ENCODE measurements at regions of chr19 and their contacts with region 1.

Region 1: DNA sequence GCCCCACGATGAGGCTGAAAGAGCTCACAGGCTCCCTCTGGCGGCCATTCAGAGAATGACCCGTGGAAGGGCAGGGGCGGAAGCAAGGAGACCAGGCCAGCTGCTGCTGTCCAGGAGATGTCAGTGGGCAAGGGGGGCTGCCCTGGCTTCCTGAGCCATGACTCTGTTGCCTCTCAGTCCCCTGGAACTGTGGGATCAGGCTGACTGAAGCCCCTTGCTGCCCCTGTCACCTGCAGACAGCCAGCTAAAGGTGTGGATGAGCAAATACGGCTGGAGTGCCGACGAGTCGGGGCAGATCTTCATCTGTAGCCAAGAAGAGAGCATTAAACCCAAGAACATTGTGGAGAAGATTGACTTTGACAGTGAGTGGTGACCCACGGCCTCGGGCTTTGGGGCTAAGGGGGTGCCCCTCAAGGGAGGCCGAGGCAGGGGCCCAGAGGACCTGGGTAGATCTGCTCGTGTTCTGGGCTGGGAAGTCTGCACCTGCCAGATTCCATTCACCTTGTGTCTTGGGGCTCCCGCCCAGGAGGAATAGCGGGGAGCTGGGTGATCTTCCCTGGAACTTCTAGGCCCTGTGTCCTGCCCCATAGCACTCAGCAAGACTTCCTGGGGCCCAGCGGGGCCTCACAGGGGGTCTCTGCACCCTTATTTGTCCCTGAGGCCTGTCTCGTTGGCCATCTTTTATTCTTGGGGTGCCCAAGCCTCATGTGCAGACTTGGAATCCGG is 12.5 kb upstream of the ACTN4 start:
- DNase-seq: no peak
- H3K4me3 ChIP-seq: no peak overlapping the region
- CTCF ChIP-seq: peak; percentile 89

Region 2: GRCh38 chr19:38402967-38403861 is 231.7 kb before region 1 on chr19 and contains the start of gene FAM98C:
- CTCF ChIA-PET with region 1: interaction called, 112 read pairs
- POLR2A ChIA-PET with region 1: interaction called, 4 read pairs
- DNase-seq: peak; percentile 46
- H3K4me3 ChIP-seq: peak within 1 kb of the TSS; percentile 95
- CTCF ChIP-seq: peak; percentile 90

Region 3: GRCh38 chr19:38485541-38486285 is 149.2 kb before region 1 on chr19:
- CTCF ChIA-PET with region 1: no interaction called
- POLR2A ChIA-PET with region 1: no interaction called
- DNase-seq: no peak
- H3K4me3 ChIP-seq: no peak overlapping the region
- CTCF ChIP-seq: no peak

Region 4: GRCh38 chr19:38544034-38544958 is 90.6 kb before region 1 on chr19:
- CTCF ChIA-PET with region 1: interaction called, 13 read pairs
- POLR2A ChIA-PET with region 1: no interaction called
- DNase-seq: peak; percentile 12
- H3K4me3 ChIP-seq: no peak overlapping the region
- CTCF ChIP-seq: peak; percentile 15

Region 5: DNA sequence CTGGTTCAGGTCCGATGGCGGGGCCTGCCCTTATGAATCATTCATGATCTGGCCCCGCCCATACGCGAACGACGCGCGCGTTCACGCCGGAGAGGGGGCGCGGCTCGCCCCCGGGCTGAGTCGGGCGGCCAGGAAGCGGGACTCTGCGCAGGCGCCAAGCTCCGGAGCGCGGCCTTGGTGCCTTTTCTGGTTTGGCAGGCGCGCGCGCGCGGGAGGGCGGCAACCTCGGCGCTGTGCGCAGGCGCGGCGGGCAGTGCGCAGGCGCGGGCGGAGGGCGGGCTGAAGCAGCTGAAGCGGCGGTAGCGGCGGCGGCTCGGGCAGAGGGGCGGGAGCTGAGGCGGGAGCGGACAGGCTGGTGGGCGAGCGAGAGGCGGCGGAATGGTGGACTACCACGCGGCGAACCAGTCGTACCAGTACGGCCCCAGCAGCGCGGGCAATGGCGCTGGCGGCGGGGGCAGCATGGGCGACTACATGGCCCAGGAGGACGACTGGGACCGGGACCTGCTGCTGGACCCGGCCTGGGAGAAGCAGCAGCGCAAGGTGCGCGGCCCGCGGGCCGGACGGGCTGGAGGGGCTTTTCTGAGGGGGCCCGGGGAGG is 12.5 kb after region 1 on chr19 and contains the start of gene ACTN4:
- CTCF ChIA-PET with region 1: interaction called, 106 read pairs
- POLR2A ChIA-PET with region 1: interaction called, 4 read pairs
- DNase-seq: no peak
- H3K4me3 ChIP-seq: peak within 1 kb of the TSS; percentile 98
- CTCF ChIP-seq: no peak

Region 6: DNA sequence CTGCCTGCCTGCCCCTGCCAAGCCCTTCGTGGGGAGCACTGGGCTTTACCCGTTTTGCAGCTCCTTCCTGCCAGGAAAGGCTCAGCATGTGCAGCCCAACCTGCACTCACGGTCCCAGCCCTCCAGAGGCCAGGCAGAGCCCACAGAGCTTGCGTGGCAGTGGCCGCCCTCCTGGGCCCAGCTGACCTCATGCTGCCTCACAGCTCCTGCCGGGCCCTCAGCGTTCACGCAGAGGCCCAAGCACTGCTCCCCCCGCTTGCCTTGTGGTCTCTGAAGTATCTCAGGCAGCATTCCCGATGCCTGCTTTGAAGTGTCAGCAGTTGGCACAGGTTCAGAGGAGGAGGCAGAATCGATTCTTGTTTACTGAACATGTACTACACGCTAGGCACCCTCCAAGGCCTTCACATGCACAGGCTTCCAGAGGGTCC is 76.8 kb after region 1 on chr19:
- CTCF ChIA-PET with region 1: interaction called, 14 read pairs
- POLR2A ChIA-PET with region 1: no interaction called
- DNase-seq: no peak
- H3K4me3 ChIP-seq: no peak overlapping the region
- CTCF ChIP-seq: peak; percentile 4